ENCODE measurements at regions of chrX and their contacts with region 1.

Region 1: DNA sequence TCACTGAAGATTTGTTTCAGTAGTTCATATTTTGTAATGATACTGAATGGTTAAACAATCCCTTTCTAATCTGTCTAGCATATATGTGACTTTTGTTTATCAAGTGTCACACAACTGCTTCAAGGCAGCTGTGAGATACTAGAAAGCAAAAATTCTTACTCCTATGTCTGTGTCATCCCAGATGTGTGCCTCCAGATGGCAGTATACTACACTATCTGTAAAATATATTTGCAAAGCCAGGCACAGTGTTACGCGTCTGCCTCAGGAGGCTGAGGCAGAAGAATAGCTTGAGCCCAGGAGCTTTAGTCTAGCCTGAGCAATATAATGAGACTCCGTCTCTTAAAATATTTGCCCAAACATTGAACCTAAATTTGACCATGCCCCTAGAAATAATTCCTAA is 4.0 kb downstream of the NUDT10 start:
- DNase-seq: peak; percentile 44 to 70 (median 68)
- H3K4me3 ChIP-seq: no peak overlapping the region
- H3K27ac ChIP-seq: no peak overlapping the region
- H3K4me1 ChIP-seq: peaks cover 0 to 5% (median 0%) of the 10 kb centered on the region in 4 experiments
- H3K27me3 ChIP-seq: peaks cover 0 to 2% (median 0%) of the 10 kb centered on the region in 5 experiments

Region 2: DNA sequence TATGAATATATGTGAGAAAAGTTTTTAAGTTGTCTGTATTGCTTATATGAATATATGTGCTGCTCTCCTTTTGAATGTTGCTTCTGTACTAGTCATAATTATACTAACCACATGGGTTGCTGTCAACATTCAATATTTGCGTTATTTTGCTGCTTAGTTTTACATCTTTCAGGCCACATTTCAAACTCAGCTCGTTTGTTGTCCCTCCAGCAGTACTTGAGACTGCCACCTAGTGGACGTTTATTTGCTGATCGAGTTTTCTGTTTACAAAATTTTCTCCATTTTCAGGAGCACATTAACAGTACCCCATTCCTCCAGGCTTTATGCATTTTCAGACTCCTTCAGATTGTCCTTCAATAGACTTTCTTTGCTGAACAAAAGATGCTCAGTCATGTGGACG is 84.0 kb after region 1 on chrX:
- CTCF ChIA-PET with region 1: interaction called, 49 read pairs
- POLR2A ChIA-PET with region 1: no interaction called
- DNase-seq: peak; percentile 48 to 79 (median 79)
- H3K4me3 ChIP-seq: no peak overlapping the region
- H3K27ac ChIP-seq: no peak overlapping the region
- H3K4me1 ChIP-seq: no peaks in the 10 kb centered on the region
- H3K27me3 ChIP-seq: no peaks in the 10 kb centered on the region